ENCODE measurements at regions of chr5 and their contacts with region 1.

Region 1: DNA sequence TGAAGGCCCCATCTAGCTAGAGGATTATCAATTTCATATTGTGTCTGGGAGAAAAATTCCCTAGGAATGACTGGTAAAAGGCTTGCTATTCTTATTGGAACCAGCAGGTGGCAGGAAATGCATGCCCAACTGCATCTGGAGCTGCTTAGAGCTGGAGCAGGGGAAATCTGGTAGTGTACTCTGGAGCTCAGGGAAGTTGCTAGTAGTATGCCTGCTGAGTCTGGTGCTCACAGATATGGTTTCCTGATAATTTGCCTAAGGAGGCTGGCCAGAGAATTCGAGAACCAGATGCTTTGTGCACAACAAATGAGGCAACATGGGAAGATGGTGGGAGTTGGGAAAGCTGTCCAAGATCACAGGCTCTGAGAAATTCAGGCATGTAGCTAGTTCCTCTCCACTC is 53.7 kb downstream of the G3BP1 start:
- DNase-seq: peak; percentile 36
- ATAC-seq: peak; percentile 83
- H3K4me3 ChIP-seq: no peak overlapping the region
- H3K27ac ChIP-seq: no peak overlapping the region
- H3K4me1 ChIP-seq: no peaks in the 10 kb centered on the region
- H3K27me3 ChIP-seq: no peaks in the 10 kb centered on the region
- CTCF ChIP-seq: peak; percentile 71 to 89 (median 84); a peak in 5 of 6 replicates
- POLR2A ChIP-seq: no peak
- RAD21 ChIP-seq: peak; percentile 89

Region 2: GRCh38 chr5:151781201-151781600 is 44.2 kb before region 1 on chr5:
- CTCF ChIA-PET with region 1: no interaction called
- POLR2A ChIA-PET with region 1: no interaction called
- RAD21 ChIA-PET with region 1: no interaction called
- intact Hi-C with region 1: no loop called
- DNase-seq: no peak
- ATAC-seq: no peak
- H3K4me3 ChIP-seq: no peak overlapping the region
- H3K27ac ChIP-seq: no peak overlapping the region
- H3K4me1 ChIP-seq: peaks cover 2 to 3% of the 10 kb centered on the region in 2 experiments; a peak in 3 of 4 replicates
- H3K27me3 ChIP-seq: no peaks in the 10 kb centered on the region
- CTCF ChIP-seq: no peak
- POLR2A ChIP-seq: no peak
- RAD21 ChIP-seq: no peak

Region 3: DNA sequence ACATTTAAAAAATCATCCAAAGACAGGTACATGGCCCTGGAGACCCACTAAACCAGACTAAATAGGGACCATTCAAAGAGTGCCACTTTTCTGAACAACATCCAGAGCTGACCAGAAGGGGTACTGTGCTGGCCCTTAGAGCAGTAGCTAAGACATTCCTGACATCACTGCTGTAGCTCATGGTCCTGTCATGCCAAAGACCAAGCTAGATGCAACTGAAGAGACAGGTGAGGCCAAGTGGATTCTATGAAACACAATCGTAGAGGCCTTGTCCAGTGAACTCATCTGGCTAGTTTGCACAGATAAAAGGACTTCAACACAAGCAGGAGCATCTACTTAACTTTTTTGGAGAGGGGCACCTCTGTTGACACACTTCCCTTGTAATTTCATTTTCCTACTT is 10.4 kb before region 1 on chr5:
- CTCF ChIA-PET with region 1: interaction called, 10 read pairs
- POLR2A ChIA-PET with region 1: no interaction called
- RAD21 ChIA-PET with region 1: no interaction called
- intact Hi-C with region 1: no loop called
- DNase-seq: no peak
- ATAC-seq: no peak
- H3K4me3 ChIP-seq: no peak overlapping the region
- H3K27ac ChIP-seq: no peak overlapping the region
- H3K4me1 ChIP-seq: no peaks in the 10 kb centered on the region
- H3K27me3 ChIP-seq: no peaks in the 10 kb centered on the region
- CTCF ChIP-seq: no peak
- POLR2A ChIP-seq: no peak
- RAD21 ChIP-seq: no peak

Region 4: DNA sequence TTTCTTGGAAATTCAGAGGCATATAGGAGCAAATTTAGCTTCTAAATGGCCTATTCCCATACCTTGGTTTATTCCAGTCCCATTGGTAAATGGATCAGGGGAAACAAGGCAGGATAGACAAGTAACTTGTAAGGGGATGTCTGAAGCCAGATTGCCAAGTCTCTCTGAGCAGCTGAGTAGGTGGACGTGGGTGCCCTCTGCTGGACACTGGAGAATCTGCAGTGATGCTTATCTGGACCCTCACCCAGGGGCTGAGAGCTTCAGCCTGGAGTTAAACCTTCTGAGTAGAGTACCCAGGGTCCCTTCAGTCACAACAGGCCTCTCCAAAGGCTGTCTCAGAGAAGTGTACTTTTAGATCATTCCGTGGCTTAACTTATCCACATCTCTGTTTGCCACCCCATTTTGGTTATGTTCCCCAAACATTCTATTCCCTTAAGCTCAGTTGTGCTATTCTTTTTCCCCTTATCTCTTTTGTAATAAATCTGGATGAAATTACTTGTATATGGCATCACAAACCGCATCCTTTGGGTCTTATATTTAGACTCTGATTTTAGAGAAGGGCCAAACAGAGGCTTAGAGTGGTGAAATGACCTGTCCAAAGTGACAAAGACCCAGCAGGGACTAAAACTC is 317.5 kb after region 1 on chr5:
- CTCF ChIA-PET with region 1: interaction called, 70 read pairs
- POLR2A ChIA-PET with region 1: no interaction called
- RAD21 ChIA-PET with region 1: interaction called, 5 read pairs
- intact Hi-C with region 1: loop called (anchors 1 kb)
- DNase-seq: peak; percentile 33
- ATAC-seq: peak; percentile 88
- H3K4me3 ChIP-seq: no peak overlapping the region
- H3K27ac ChIP-seq: no peak overlapping the region
- H3K4me1 ChIP-seq: no peaks in the 10 kb centered on the region
- H3K27me3 ChIP-seq: peaks cover 21% of the 10 kb centered on the region
- CTCF ChIP-seq: peak; percentile 34 to 87 (median 84); a peak in 5 of 6 replicates
- POLR2A ChIP-seq: no peak
- RAD21 ChIP-seq: peak; percentile 71

Region 5: GRCh38 chr5:152193367-152194107 is 368.1 kb after region 1 on chr5:
- CTCF ChIA-PET with region 1: no interaction called
- POLR2A ChIA-PET with region 1: no interaction called
- RAD21 ChIA-PET with region 1: no interaction called
- intact Hi-C with region 1: no loop called
- DNase-seq: no peak
- ATAC-seq: no peak
- H3K4me3 ChIP-seq: no peak overlapping the region
- H3K27ac ChIP-seq: no peak overlapping the region
- H3K4me1 ChIP-seq: no peaks in the 10 kb centered on the region
- H3K27me3 ChIP-seq: peaks cover 6% of the 10 kb centered on the region; the same call in 1 of the 2 replicates
- CTCF ChIP-seq: no peak
- POLR2A ChIP-seq: no peak
- RAD21 ChIP-seq: no peak

Region 6: GRCh38 chr5:152271420-152271819 is 446.0 kb after region 1 on chr5:
- CTCF ChIA-PET with region 1: no interaction called
- POLR2A ChIA-PET with region 1: no interaction called
- RAD21 ChIA-PET with region 1: no interaction called
- intact Hi-C with region 1: loop called (anchors 1 kb)
- DNase-seq: peak; percentile 2
- ATAC-seq: peak; percentile 55; the same call in 1 of the 2 replicates
- H3K4me3 ChIP-seq: no peak overlapping the region
- H3K27ac ChIP-seq: no peak overlapping the region
- H3K4me1 ChIP-seq: no peaks in the 10 kb centered on the region
- H3K27me3 ChIP-seq: no peaks in the 10 kb centered on the region
- CTCF ChIP-seq: peak in 2 of 3 experiments; percentile 22 to 44; a peak in 3 of 6 replicates
- POLR2A ChIP-seq: no peak
- RAD21 ChIP-seq: peak; percentile 48

Region 7: GRCh38 chr5:152349683-152350526 is 524.5 kb after region 1 on chr5:
- CTCF ChIA-PET with region 1: interaction called, 26 read pairs
- POLR2A ChIA-PET with region 1: no interaction called
- RAD21 ChIA-PET with region 1: no interaction called
- intact Hi-C with region 1: loop called (anchors 2 kb)
- DNase-seq: peak; percentile 15
- ATAC-seq: peak; percentile 82
- H3K4me3 ChIP-seq: no peak overlapping the region
- H3K27ac ChIP-seq: no peak overlapping the region
- H3K4me1 ChIP-seq: no peaks in the 10 kb centered on the region
- H3K27me3 ChIP-seq: no peaks in the 10 kb centered on the region
- CTCF ChIP-seq: peak; percentile 25 to 90 (median 89); a peak in 5 of 6 replicates
- POLR2A ChIP-seq: no peak
- RAD21 ChIP-seq: peak; percentile 64

Region 8: GRCh38 chr5:152505442-152506042 is 680.1 kb after region 1 on chr5:
- CTCF ChIA-PET with region 1: interaction called, 13 read pairs
- POLR2A ChIA-PET with region 1: no interaction called
- RAD21 ChIA-PET with region 1: no interaction called
- intact Hi-C with region 1: loop called (anchors 1 kb)
- DNase-seq: peak; percentile 33
- ATAC-seq: peak; percentile 94
- H3K4me3 ChIP-seq: no peak overlapping the region
- H3K27ac ChIP-seq: no peak overlapping the region
- H3K4me1 ChIP-seq: no peaks in the 10 kb centered on the region
- H3K27me3 ChIP-seq: no peaks in the 10 kb centered on the region
- CTCF ChIP-seq: peak; percentile 40 to 70 (median 47); a peak in 5 of 6 replicates
- POLR2A ChIP-seq: no peak
- RAD21 ChIP-seq: peak; percentile 68

Measured in HCT116 (cell line).